ENCODE measurements at regions of chr11 and their contacts with region 1.

Region 1: GRCh38 chr11:64025205-64025604 is 10.5 kb upstream of the FLRT1 start:
- DNase-seq: no peak
- H3K4me3 ChIP-seq: no peak overlapping the region
- H3K27ac ChIP-seq: no peak overlapping the region
- H3K27me3 ChIP-seq: peaks cover 27% of the 10 kb centered on the region
- CTCF ChIP-seq: no peak

Region 2: DNA sequence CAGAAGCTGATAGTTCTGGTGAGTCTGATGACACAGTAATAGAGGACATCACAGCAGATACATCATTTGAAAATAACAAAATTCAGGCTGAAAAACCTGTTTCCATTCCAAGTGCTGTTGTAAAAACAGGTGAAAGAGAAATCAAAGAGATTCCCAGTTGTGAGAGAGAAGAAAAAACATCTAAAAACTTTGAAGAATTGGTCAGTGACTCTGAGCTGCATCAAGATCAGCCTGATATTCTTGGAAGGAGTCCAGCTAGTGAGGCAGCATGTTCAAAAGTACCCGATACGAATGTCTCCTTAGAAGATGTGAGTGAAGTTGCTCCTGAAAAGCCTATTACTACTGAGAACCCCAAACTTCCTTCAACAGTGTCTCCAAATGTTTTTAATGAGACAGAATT is 305.2 kb before region 1 on chr11:
- CTCF ChIA-PET with region 1: no interaction called
- POLR2A ChIA-PET with region 1: interaction called, 10 read pairs
- DNase-seq: peak; percentile 18
- H3K4me3 ChIP-seq: no peak overlapping the region
- H3K27ac ChIP-seq: no peak overlapping the region
- H3K27me3 ChIP-seq: no peaks in the 10 kb centered on the region
- CTCF ChIP-seq: no peak

Region 3: DNA sequence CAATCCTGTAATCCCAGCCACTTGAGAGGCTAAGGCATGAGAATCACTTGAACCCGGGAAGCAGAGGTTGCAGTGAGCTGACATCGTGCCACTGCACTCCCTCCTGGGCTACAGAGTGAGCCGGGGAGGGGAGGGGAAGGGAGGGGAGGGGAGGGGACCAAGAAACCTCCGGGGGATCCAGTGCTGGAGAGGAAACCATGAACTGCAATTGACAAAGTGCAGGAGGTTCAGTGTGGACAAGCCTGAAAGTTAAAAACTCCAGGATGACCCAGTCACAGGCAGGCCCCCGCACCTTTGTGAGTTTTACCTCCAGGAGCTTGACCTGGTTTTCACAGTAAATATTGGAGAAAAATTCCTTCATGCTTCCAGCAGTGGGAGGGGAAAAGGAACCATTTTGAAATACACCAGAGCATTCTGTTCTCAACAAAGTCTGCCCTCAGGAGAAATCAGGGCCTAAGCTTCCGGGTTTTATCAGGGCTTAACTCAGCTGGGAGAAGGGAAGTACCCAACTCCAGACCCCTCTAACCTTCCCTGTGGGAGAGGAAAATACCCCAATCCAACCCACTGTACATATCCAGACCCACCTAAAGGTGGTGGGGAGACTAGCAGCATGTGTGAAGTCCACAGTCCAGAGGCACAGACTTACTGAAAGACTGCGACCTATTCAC is 241.1 kb before region 1 on chr11:
- CTCF ChIA-PET with region 1: no interaction called
- POLR2A ChIA-PET with region 1: no interaction called
- DNase-seq: no peak
- H3K4me3 ChIP-seq: no peak overlapping the region
- H3K27ac ChIP-seq: no peak overlapping the region
- H3K27me3 ChIP-seq: no peaks in the 10 kb centered on the region
- CTCF ChIP-seq: no peak

Region 4: GRCh38 chr11:64008283-64008913 is 16.8 kb before region 1 on chr11:
- CTCF ChIA-PET with region 1: no interaction called
- POLR2A ChIA-PET with region 1: no interaction called
- DNase-seq: no peak
- H3K4me3 ChIP-seq: no peak overlapping the region
- H3K27ac ChIP-seq: no peak overlapping the region
- H3K27me3 ChIP-seq: no peaks in the 10 kb centered on the region
- CTCF ChIP-seq: no peak

Measured in AG04450 (cell line).